ENCODE measurements at regions of chr14 and their contacts with region 1.

Region 1: DNA sequence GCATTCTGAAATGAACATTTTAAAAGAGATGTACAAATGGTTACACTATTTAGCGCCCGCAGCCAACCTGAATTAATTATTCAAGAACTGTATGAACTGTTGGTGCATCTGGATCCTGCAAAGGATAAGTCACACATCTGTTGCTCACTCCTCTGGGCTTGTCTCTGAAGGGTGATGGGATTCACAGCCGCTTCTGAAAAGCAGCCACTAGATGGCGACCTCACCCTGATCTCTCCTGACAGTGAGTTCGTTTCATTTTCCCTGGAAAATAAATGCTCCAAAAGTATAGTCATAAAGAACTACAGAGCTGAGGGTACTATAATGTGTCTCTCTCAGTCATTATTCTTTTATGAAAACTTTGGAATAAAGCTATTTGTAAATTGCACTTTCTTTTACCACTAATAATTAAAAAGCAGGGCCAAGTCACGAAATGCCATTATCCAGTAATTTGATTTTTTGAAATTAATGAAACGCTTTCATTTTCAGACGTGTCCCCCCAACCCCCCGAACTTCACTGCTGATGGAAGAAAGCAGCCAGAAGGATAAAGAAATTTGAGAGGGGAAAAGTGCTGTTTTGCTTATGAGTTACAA is 789.6 kb downstream of the NRXN3 start:
- DNase-seq: peak; percentile 43
- H3K4me3 ChIP-seq: no peak overlapping the region
- H3K27ac ChIP-seq: no peak overlapping the region
- H3K4me1 ChIP-seq: no peaks in the 10 kb centered on the region
- CTCF ChIP-seq: peak; percentile 96

Region 2: DNA sequence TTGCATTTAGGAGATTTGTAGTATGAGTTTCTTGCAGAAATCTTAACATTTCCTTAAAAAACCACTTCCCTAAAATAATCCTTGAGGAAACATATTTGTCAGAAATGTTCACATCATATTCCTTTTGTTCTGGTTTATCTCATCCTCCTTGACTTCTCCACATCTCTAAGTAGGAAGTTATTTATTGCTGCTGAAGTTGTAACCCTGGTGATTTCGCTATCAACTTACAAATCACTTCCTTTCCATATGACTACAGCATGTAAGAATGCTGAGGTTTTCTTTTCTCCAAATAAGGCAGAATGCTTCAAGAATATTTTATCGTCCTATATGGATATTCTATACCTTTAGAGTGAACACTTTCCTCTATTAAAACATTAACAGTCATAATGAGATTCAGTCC is 37.9 kb before region 1 on chr14:
- CTCF ChIA-PET with region 1: no interaction called
- POLR2A ChIA-PET with region 1: interaction called, 14 read pairs
- intact Hi-C with region 1: no loop called
- DNase-seq: no peak
- H3K4me3 ChIP-seq: no peak overlapping the region
- H3K27ac ChIP-seq: no peak overlapping the region
- H3K4me1 ChIP-seq: no peaks in the 10 kb centered on the region
- CTCF ChIP-seq: no peak